Heart left ventricle (tissue), 16 donors: ENCODE measurements at regions of chr5 and their contacts with region 1.

Region 1: GRCh38 chr5:122415030-122415800 is 103.2 kb downstream of the SNCAIP start:
- DNase-seq: peak; percentile 32 to 49 (median 37)
- ATAC-seq: peak; percentile 88 to 98 (median 96)
- H3K4me3 ChIP-seq: no peak overlapping the region
- H3K27ac ChIP-seq: no peak overlapping the region
- H3K4me1 ChIP-seq: peaks cover 0 to 8% (median 0%) of the 10 kb centered on the region in 12 donors
- H3K27me3 ChIP-seq: no peaks in the 10 kb centered on the region
- CTCF ChIP-seq: peak; percentile 38 to 77 (median 60)
- POLR2A ChIP-seq: no peak

Region 2: GRCh38 chr5:122295138-122295537 is 120.1 kb before region 1 on chr5:
- intact Hi-C with region 1: loop called in 6 of 10 experiments (anchors 5 to 10 kb)
- DNase-seq: no peak
- ATAC-seq: no peak
- H3K4me3 ChIP-seq: no peak overlapping the region
- H3K27ac ChIP-seq: no peak overlapping the region
- H3K4me1 ChIP-seq: no peaks in the 10 kb centered on the region
- H3K27me3 ChIP-seq: peaks cover 0 to 4% (median 0%) of the 10 kb centered on the region in 9 donors
- CTCF ChIP-seq: peak in 9 of 12 donors; percentile 14 to 47 (median 38)
- POLR2A ChIP-seq: no peak

Region 3: DNA sequence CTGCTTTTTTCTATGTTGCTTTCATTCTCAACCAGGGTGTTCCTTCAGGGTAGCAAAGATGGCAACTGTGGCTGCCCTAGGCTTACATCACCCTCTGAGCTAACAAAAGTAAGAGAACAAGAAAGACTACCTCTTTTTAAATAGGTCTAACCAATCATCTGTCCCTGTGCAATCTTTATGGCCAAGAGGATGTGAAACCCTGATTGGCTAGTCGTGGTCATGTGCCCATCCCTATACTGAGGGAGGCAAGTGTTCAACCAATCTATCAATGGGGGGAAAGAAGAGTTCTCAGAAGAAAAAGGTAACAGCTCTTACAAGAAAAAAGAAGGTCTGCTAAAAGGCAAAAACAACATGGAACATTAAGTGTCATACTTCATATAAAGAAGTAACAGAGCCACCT is 114.8 kb before region 1 on chr5:
- intact Hi-C with region 1: loop called in 6 of 10 experiments (anchors 5 to 10 kb)
- DNase-seq: no peak
- ATAC-seq: no peak
- H3K4me3 ChIP-seq: no peak overlapping the region
- H3K27ac ChIP-seq: no peak overlapping the region
- H3K4me1 ChIP-seq: peaks cover 0 to 3% (median 0%) of the 10 kb centered on the region in 12 donors
- H3K27me3 ChIP-seq: peaks cover 0 to 5% (median 0%) of the 10 kb centered on the region in 9 donors
- CTCF ChIP-seq: no peak
- POLR2A ChIP-seq: no peak

Region 4: DNA sequence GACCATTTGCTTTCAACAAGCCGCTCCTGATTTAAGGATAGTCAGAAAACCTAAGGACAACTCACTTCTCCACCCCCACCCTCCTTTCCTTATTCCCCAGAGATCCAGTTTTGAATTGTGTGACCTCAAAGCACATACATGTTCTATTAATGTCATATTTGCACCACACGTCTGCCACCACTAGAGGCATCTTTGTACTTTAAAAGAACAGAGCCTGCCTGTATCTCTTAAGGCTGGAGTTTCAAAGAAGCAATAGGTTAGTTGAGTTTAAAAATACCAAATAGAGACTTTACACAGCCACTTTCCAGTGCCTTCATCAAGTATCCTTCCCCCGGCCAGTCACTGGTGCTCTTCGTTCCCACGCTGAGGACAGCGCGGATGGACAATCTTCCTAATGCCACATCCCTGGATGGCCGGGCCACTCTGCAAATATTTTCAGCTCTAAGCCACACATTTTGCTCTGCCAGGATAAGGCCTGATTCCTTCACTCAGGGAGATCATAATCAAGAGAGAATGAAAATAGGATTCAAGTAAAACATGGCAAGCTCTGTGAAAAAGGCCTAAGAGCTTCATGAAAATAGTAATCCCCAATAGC is 43.2 kb after region 1 on chr5:
- intact Hi-C with region 1: no loop called
- DNase-seq: no peak
- ATAC-seq: no peak
- H3K4me3 ChIP-seq: no peak overlapping the region
- H3K27ac ChIP-seq: no peak overlapping the region
- H3K4me1 ChIP-seq: peaks cover 0 to 3% (median 0%) of the 10 kb centered on the region in 12 donors
- H3K27me3 ChIP-seq: no peaks in the 10 kb centered on the region
- CTCF ChIP-seq: peak in 11 of 12 donors; percentile 22 to 52 (median 32)
- POLR2A ChIP-seq: no peak